Tibial artery (tissue), 4 donors: ENCODE measurements at regions of chr12 and their contacts with region 1.

Region 1: GRCh38 chr12:64696080-64696741 is 63.0 kb downstream of the GNS start:
- DNase-seq: no peak
- H3K4me3 ChIP-seq: no peak overlapping the region
- H3K27ac ChIP-seq: peak overlapping the region; percentile 43 to 88
- H3K4me1 ChIP-seq: peaks cover 0 to 75% (median 17%) of the 10 kb centered on the region in 4 donors
- H3K27me3 ChIP-seq: no peaks in the 10 kb centered on the region
- CTCF ChIP-seq: peak; percentile 31 to 47

Region 2: DNA sequence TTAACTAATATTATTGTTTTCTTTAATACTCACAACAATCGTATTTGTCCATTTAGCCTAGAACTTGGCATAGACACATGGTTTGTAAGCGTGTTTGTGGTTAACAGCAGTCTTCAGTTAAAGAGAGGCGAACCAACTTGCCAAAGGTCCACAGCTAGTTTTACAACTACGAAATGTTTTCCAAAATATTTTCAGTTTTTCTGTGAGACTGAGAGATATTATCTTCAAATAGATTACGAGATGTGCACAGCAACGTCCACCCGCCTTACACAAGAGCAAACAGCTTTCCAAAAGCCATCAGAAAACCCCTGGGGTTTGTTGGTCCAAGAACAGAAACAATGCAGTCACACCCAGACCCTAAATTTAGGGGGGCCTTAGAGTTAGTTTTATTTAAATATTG is 144.5 kb before region 1 on chr12:
- intact Hi-C with region 1: loop called (anchors 2 kb)
- DNase-seq: no peak
- H3K4me3 ChIP-seq: no peak overlapping the region
- H3K27ac ChIP-seq: no peak overlapping the region
- H3K4me1 ChIP-seq: peaks cover 0 to 2% (median 0%) of the 10 kb centered on the region in 4 donors
- H3K27me3 ChIP-seq: no peaks in the 10 kb centered on the region
- CTCF ChIP-seq: no peak

Region 3: DNA sequence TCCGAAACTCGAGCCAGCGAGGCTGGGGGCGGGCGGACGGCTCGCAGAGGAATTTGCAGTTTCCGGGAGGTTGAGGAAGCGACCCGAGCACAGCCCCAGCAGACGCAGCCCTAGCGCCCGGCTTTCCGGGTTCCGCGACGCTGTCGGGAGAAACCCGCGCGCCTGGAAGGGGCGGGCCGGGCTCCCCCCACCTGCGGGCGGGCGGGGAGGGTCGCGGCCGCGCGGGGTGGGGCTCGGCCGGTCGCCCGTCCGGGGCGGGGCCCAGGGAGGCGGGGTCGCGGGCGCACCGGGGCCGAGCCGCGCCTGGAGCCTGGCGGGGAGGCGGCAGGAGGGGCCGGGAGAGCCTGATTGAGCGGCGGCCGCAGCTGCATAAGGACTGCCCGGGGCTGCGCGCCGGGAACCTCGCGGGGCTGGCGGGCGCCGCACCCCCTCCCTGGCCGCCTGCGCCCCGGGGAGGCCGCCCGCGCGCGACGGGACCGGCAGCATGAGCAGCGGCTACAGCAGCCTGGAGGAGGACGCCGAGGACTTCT is 86.0 kb before region 1 on chr12 and contains the start of gene RASSF3:
- intact Hi-C with region 1: loop called (anchors 5 kb)
- DNase-seq: peak; percentile 44 to 86
- H3K4me3 ChIP-seq: peak within 1 kb of the TSS; percentile 85 to 87
- H3K27ac ChIP-seq: peak within 1 kb of the TSS; percentile 88 to 94
- H3K4me1 ChIP-seq: peaks cover 0 to 32% (median 17%) of the 10 kb centered on the region in 4 donors
- H3K27me3 ChIP-seq: no peaks in the 10 kb centered on the region
- CTCF ChIP-seq: no peak

Region 4: GRCh38 chr12:64650762-64651161 is 45.4 kb before region 1 on chr12:
- intact Hi-C with region 1: no loop called
- DNase-seq: no peak
- H3K4me3 ChIP-seq: no peak overlapping the region
- H3K27ac ChIP-seq: peak overlapping the region; percentile 83 to 88
- H3K4me1 ChIP-seq: peaks cover 0 to 99% (median 46%) of the 10 kb centered on the region in 4 donors
- H3K27me3 ChIP-seq: no peaks in the 10 kb centered on the region
- CTCF ChIP-seq: no peak